Caco-2 (cell line): ENCODE measurements at regions of chr7 and their contacts with region 1.

Region 1: GRCh38 chr7:51366930-51367613 is 50.5 kb upstream of the COBL start:
- DNase-seq: peak; percentile 79
- H3K4me3 ChIP-seq: no peak overlapping the region
- H3K4me3 Mint-ChIP-seq: no peak overlapping the region
- H3K27ac Mint-ChIP-seq: peak overlapping the region; percentile 52
- H3K4me1 ChIP-seq: peaks cover 14% of the 10 kb centered on the region
- H3K4me1 Mint-ChIP-seq: peaks cover 22% of the 10 kb centered on the region
- H3K27me3 ChIP-seq: no peaks in the 10 kb centered on the region
- H3K27me3 Mint-ChIP-seq: no peaks in the 10 kb centered on the region
- CTCF ChIP-seq: peak; percentile 89 to 90

Region 2: DNA sequence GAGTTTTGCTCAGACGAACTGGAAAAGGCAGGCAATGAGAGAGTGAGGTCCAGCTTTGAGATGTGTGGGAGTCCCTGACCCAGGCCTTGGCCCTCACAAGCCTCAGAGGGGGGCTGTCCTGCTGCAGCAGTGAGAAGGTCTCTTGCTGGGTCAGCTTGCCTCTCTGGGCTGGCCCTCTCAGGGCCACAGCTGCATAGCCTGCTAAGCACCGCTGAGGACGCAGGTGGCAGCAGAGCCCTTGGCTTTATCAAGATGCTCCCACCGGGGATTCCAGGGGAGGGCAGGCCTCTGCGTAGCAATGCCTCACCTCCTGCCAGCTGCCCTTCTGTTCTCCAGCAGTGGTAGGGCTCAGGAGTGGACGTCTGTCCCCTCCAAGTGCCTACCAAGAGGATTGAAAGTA is 179.1 kb before region 1 on chr7:
- CTCF ChIA-PET with region 1: interaction called, 12 read pairs
- POLR2A ChIA-PET with region 1: no interaction called
- intact Hi-C with region 1: loop called (anchors 1 kb)
- DNase-seq: peak; percentile 53 to 56
- H3K4me3 ChIP-seq: no peak overlapping the region
- H3K4me3 Mint-ChIP-seq: no peak overlapping the region
- H3K27ac Mint-ChIP-seq: no peak overlapping the region
- H3K4me1 ChIP-seq: no peaks in the 10 kb centered on the region
- H3K4me1 Mint-ChIP-seq: no peaks in the 10 kb centered on the region
- H3K27me3 ChIP-seq: no peaks in the 10 kb centered on the region
- H3K27me3 Mint-ChIP-seq: no peaks in the 10 kb centered on the region
- CTCF ChIP-seq: peak in 1 of 2 experiments; percentile 48

Region 3: GRCh38 chr7:51253161-51253560 is 113.9 kb before region 1 on chr7:
- CTCF ChIA-PET with region 1: interaction called, 9 read pairs
- POLR2A ChIA-PET with region 1: no interaction called
- intact Hi-C with region 1: loop called (anchors 1 kb)
- DNase-seq: peak in 1 of 2 experiments; percentile 25
- H3K4me3 ChIP-seq: no peak overlapping the region
- H3K4me3 Mint-ChIP-seq: no peak overlapping the region
- H3K27ac Mint-ChIP-seq: no peak overlapping the region
- H3K4me1 ChIP-seq: peaks cover 37% of the 10 kb centered on the region
- H3K4me1 Mint-ChIP-seq: peaks cover 39% of the 10 kb centered on the region
- H3K27me3 ChIP-seq: no peaks in the 10 kb centered on the region
- H3K27me3 Mint-ChIP-seq: no peaks in the 10 kb centered on the region
- CTCF ChIP-seq: peak; percentile 28 to 36

Region 4: DNA sequence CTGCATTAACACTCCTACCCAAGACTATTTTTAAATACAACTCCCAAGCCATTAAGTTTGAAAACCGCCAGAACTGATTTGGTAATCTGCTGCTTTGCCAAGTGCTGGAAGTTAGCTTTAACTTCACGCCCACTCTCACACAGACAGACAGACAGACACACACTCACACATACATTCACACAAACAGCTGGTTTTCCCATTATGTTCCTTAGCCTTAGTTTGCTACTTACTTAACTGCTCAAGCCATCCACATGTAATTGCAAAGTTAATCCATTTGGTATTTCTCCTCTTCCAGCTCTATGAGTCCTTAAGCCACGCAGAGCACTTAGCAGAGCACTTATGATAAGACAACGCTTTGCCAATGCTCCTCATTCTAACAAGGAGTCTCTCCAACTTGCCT is 58.8 kb before region 1 on chr7:
- CTCF ChIA-PET with region 1: interaction called, 21 read pairs
- POLR2A ChIA-PET with region 1: no interaction called
- intact Hi-C with region 1: loop called (anchors 1 kb)
- DNase-seq: no peak
- H3K4me3 ChIP-seq: no peak overlapping the region
- H3K4me3 Mint-ChIP-seq: no peak overlapping the region
- H3K27ac Mint-ChIP-seq: no peak overlapping the region
- H3K4me1 ChIP-seq: peaks cover 10% of the 10 kb centered on the region
- H3K4me1 Mint-ChIP-seq: peaks cover 13% of the 10 kb centered on the region
- H3K27me3 ChIP-seq: no peaks in the 10 kb centered on the region
- H3K27me3 Mint-ChIP-seq: no peaks in the 10 kb centered on the region
- CTCF ChIP-seq: no peak

Region 5: GRCh38 chr7:51344406-51345138 is 22.5 kb before region 1 on chr7:
- CTCF ChIA-PET with region 1: interaction called, 13 read pairs
- POLR2A ChIA-PET with region 1: no interaction called
- intact Hi-C with region 1: loop called (anchors 1 kb)
- DNase-seq: peak; percentile 67 to 73
- H3K4me3 ChIP-seq: no peak overlapping the region
- H3K4me3 Mint-ChIP-seq: peak overlapping the region; percentile 51
- H3K27ac Mint-ChIP-seq: peak overlapping the region; percentile 76
- H3K4me1 ChIP-seq: peaks cover 60% of the 10 kb centered on the region
- H3K4me1 Mint-ChIP-seq: peaks cover 39% of the 10 kb centered on the region
- H3K27me3 ChIP-seq: no peaks in the 10 kb centered on the region
- H3K27me3 Mint-ChIP-seq: no peaks in the 10 kb centered on the region
- CTCF ChIP-seq: no peak

Region 6: DNA sequence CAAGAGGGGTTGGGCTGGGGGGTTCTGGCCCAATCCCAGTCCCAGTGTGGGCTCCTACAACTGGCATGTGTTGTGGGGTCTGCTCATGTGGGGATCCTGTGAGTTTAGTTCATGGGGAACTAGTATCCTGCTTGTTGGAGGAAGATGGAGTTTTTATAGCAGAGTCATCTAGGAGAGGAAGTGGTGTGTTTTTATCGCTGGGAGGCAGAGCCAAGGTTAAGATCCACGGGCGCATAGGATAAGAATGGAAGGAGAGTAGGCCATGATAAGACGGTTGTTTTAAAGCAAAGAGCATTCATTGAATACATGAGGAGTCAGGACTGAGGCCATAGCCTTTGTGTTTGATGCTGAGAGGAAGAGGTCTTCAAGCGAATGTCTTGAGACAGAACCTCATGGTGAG is 161.1 kb after region 1 on chr7:
- CTCF ChIA-PET with region 1: no interaction called
- POLR2A ChIA-PET with region 1: no interaction called
- intact Hi-C with region 1: no loop called
- DNase-seq: no peak
- H3K4me3 ChIP-seq: no peak overlapping the region
- H3K4me3 Mint-ChIP-seq: no peak overlapping the region
- H3K27ac Mint-ChIP-seq: no peak overlapping the region
- H3K4me1 ChIP-seq: no peaks in the 10 kb centered on the region
- H3K4me1 Mint-ChIP-seq: no peaks in the 10 kb centered on the region
- H3K27me3 ChIP-seq: no peaks in the 10 kb centered on the region
- H3K27me3 Mint-ChIP-seq: peaks cover 7% of the 10 kb centered on the region
- CTCF ChIP-seq: no peak

Region 7: DNA sequence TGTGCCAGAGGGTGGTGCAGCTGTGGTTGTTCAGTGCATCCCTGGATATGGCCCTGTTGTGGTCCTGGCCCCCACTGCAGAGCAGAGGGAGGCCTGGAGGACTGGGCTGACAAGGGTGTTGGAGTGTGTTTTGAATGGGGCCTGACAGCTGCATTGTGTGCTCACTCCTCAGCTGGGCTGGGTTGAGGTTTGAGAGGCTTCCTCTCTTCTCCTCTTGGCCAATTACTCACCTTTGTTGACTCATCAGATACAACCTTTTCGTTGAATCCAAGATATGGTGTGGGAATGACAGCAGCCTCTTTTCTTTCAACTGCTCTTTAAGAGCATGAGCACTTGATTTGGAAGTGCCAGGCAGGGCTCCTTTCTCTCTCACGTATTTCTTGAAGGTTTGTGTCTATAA is 178.1 kb after region 1 on chr7:
- CTCF ChIA-PET with region 1: no interaction called
- POLR2A ChIA-PET with region 1: no interaction called
- intact Hi-C with region 1: no loop called
- DNase-seq: no peak
- H3K4me3 ChIP-seq: no peak overlapping the region
- H3K4me3 Mint-ChIP-seq: no peak overlapping the region
- H3K27ac Mint-ChIP-seq: no peak overlapping the region
- H3K4me1 ChIP-seq: no peaks in the 10 kb centered on the region
- H3K4me1 Mint-ChIP-seq: peaks cover 7% of the 10 kb centered on the region
- H3K27me3 ChIP-seq: no peaks in the 10 kb centered on the region
- H3K27me3 Mint-ChIP-seq: no peaks in the 10 kb centered on the region
- CTCF ChIP-seq: no peak

Region 8: DNA sequence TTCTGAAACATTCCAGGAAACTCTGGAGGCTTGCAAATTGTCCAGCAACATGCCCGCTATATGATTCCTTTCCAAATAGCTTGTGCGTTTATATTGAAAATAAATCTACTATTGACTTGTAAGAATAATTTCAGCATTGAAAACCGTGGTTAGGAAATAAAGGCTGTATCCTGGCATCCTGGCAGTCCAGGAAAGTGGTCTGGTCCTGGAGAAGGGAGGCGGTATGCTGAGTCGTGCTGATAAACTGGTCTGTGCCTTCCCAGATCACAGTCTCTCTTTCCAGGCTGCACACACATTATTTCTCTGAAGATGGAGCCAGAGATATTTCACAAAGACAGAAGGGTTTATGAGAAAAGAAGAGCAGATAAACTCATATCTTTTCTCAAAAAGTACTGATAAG is 299.7 kb after region 1 on chr7:
- CTCF ChIA-PET with region 1: no interaction called
- POLR2A ChIA-PET with region 1: no interaction called
- intact Hi-C with region 1: no loop called
- DNase-seq: peak in 1 of 2 experiments; percentile 33
- H3K4me3 ChIP-seq: no peak overlapping the region
- H3K4me3 Mint-ChIP-seq: peak overlapping the region; percentile 48
- H3K27ac Mint-ChIP-seq: no peak overlapping the region
- H3K4me1 ChIP-seq: peaks cover 16% of the 10 kb centered on the region
- H3K4me1 Mint-ChIP-seq: peaks cover 8% of the 10 kb centered on the region
- H3K27me3 ChIP-seq: no peaks in the 10 kb centered on the region
- H3K27me3 Mint-ChIP-seq: peaks cover 2% of the 10 kb centered on the region
- CTCF ChIP-seq: no peak

Region 9: DNA sequence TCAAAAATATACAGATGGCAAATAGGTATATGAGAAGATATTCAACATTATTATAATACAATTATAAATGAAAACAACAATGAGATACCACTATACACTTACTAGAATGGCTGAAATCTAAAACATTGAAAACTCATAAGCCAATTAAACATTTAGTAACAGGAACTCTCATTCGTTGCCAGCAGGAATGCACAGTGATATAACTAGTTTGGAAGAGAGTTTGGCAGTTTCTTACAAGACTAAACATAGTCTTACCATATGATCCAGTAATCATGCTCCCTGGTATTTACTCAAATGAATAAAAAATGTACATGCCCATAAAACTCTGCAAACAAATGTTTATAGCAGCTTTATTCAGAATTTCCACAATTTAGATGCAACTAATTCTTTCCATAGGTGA is 425.7 kb after region 1 on chr7:
- CTCF ChIA-PET with region 1: no interaction called
- POLR2A ChIA-PET with region 1: no interaction called
- intact Hi-C with region 1: no loop called
- DNase-seq: no peak
- H3K4me3 ChIP-seq: no peak overlapping the region
- H3K4me3 Mint-ChIP-seq: no peak overlapping the region
- H3K27ac Mint-ChIP-seq: no peak overlapping the region
- H3K4me1 ChIP-seq: no peaks in the 10 kb centered on the region
- H3K4me1 Mint-ChIP-seq: peaks cover 7% of the 10 kb centered on the region
- H3K27me3 ChIP-seq: no peaks in the 10 kb centered on the region
- H3K27me3 Mint-ChIP-seq: no peaks in the 10 kb centered on the region
- CTCF ChIP-seq: no peak